ENCODE measurements at regions of chr1 and their contacts with region 1.

Region 1: DNA sequence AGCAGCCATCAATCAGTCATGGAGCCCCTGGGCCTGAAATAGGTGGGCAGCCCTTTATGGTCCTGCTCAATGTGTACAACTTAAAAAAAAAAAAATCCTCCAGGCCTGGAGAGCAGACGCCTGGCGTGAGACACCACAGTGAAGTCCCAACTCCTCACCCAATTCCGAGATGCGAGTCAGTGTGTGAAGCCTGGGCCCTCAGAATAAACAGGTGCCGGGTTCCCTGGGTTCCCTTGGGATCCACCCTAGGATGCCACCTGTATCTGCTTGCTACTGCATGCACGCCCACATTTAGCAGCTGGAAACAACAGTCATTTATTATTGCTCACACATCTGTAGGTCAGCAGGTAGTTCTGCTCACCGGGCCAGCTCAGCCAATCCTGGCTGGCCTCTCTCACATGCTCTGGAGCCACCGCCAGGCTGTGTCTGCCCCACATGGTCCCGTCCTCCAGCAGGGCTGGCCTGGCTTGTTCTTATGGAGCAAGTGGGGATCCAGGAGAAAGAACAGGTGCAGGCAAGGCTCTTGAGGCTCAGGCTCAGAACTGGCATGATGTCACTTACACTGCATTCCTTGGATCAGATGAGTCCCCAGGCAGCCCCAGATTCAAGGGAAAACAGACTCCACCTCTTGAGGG is 172.7 kb downstream of the NPHP4 start:
- DNase-seq: no peak
- H3K4me3 ChIP-seq: no peak overlapping the region
- H3K27ac ChIP-seq: no peak overlapping the region
- H3K4me1 ChIP-seq: no peaks in the 10 kb centered on the region
- H3K27me3 ChIP-seq: peaks cover 0 to 19% of the 10 kb centered on the region in 2 donors
- CTCF ChIP-seq: no peak
- POLR2A ChIP-seq: no peak

Region 2: DNA sequence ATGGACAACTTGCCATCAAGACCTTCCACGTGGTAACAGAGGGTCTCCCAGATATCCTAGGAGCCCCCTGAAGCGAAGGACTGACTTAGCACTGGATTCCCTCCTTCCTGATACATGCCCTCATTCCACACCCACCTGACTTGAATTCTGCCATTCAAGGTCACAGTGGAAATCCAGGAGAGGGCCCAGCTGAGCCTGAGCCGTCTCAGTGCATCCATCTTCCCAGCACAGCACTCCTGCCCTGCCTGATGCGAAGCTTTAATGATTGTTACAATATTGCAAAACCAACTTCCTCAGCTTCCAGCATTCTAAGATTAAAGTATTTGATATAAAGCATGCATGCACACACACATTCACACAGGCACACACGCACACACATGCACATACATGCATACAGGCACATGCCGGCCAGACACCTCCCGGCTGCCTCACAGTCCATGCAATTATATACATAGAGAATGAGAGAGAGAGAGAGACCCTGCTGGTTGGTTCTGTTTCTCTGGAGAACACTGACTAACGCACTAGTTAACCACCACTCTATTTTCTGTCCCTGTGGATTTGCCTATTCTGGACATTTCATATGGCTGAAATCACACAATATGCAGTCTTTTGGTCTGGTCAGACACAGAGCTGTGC is 20.2 kb after region 1 on chr1:
- intact Hi-C with region 1: loop called (anchors 1 kb)
- DNase-seq: no peak
- H3K4me3 ChIP-seq: no peak overlapping the region
- H3K27ac ChIP-seq: no peak overlapping the region
- H3K4me1 ChIP-seq: peaks cover 0 to 8% of the 10 kb centered on the region in 2 donors
- H3K27me3 ChIP-seq: peaks cover 0 to 37% of the 10 kb centered on the region in 2 donors
- CTCF ChIP-seq: no peak
- POLR2A ChIP-seq: no peak

Measured in breast epithelium (tissue), 4 donors.